SK-N-SH (cell line): ENCODE measurements at regions of chr11 and their contacts with region 1.

Region 1: GRCh38 chr11:1202776-1203504 is 19.9 kb upstream of the MUC5B start:
- DNase-seq: peak; percentile 96
- H3K4me3 ChIP-seq: no peak overlapping the region; a peak in 1 of 4 replicates
- H3K27ac ChIP-seq: no peak overlapping the region
- H3K4me1 ChIP-seq: peaks cover 0 to 10% of the 10 kb centered on the region in 2 experiments; a peak in 1 of 4 replicates
- H3K27me3 ChIP-seq: peaks cover 5% of the 10 kb centered on the region; the same call in 1 of the 2 replicates
- CTCF ChIP-seq: peak; percentile 60
- EP300 ChIP-seq: no peak
- RAD21 ChIP-seq: peak; percentile 75

Region 2: DNA sequence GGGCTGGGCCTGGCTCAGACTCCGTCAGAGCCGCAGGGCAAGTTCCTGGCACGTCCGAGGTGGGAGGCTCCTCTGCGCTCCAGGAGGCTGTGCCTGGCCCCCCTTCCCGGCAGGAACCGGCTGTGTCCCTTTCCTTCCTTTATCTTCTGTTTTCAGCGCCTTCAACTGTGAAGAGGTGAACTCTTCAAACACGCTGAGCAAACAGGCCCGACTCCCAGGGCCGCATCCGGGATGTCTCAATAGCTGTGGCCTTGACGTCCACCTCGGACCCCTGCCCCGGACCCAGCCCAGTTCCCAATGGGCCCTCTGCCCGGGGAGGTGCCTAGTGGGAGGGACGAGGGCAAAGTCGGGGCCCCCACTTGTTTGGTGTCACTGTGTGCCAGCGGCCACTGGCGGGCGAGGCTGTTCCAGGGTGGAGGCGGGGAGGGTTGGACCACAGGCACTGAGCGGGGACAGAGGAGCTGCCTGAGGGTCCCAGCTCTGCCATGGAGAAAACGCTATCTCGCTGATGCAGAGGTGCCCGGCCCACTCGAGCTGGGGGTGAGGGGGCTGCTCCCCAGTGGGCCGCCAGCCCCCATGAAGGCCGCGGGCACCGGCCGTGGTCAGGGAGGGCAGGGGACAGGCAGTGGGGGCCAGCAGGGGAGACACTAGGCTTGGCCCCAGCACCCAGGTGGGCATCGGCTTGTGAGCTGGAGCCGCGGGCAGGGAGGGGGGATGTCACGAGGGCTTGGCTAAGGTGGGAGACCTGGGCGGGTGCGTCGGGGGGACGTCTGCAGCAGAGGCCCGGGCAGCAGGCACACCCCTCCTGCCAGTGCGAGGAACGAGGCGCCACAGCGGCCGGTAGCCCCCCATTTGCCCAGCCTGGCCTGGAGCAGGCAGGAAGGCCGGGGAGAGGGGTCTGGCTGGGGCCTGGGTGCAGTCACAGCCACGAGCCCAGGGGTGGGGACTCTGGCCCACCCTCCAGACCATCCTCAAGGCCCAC is 17.2 kb after region 1 on chr11:
- CTCF ChIA-PET with region 1: interaction called, 10 read pairs
- POLR2A ChIA-PET with region 1: no interaction called
- DNase-seq: peak; percentile 24
- H3K4me3 ChIP-seq: no peak overlapping the region
- H3K27ac ChIP-seq: no peak overlapping the region
- H3K4me1 ChIP-seq: no peaks in the 10 kb centered on the region
- H3K27me3 ChIP-seq: no peaks in the 10 kb centered on the region
- CTCF ChIP-seq: no peak
- EP300 ChIP-seq: no peak
- RAD21 ChIP-seq: no peak